IMR-90 (cell line): ENCODE measurements at regions of chr6 and their contacts with region 1.

Region 1: DNA sequence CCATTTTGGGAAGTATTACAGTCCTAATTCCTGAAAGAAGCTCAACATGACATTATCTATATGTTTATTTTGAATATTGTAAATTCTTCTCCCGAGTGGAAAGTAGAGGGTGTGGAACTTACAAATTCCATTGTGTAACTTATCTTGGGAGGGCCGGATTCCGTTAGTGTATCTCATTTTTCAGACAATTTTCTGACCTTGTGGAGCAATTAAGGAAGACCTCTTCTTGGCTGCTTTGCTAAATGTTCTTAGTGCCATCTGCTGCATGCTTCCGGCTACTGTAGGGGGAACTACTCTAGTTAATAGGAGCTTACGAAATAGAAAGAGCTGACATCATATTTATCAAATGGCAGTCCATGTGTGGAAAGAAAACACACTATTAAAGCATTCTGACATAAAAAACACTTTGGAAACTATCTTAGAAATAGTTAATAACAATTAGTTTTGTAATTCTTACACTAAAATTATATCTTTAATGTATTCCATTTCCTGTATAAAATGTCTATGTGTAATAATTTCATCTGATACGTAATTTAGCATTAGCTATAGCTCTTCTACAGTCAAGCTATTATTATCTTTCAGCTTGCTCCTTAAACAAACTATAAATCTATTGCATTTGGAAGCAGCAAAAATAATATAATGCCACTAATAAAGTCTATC is 41.5 kb upstream of the KCNQ5 start:
- DNase-seq: peak; percentile 88
- ATAC-seq: peak; percentile 95
- H3K4me3 ChIP-seq: no peak overlapping the region
- H3K27ac ChIP-seq: no peak overlapping the region
- H3K4me1 ChIP-seq: no peaks in the 10 kb centered on the region
- H3K27me3 ChIP-seq: no peaks in the 10 kb centered on the region
- CTCF ChIP-seq: peak; percentile 89
- POLR2A ChIP-seq: 0 out of 2 replicates have a peak, but pooled peaks have one; percentile 36
- RAD21 ChIP-seq: peak; percentile 91

Region 2: GRCh38 chr6:72140795-72141194 is 439.6 kb before region 1 on chr6:
- CTCF ChIA-PET with region 1: no interaction called
- POLR2A ChIA-PET with region 1: no interaction called
- dilution Hi-C with region 1: no loop called
- in situ Hi-C with region 1: loop called (anchors 25 kb)
- intact Hi-C with region 1: no loop called
- DNase-seq: peak; percentile 38
- ATAC-seq: peak; percentile 66
- H3K4me3 ChIP-seq: no peak overlapping the region
- H3K27ac ChIP-seq: no peak overlapping the region
- H3K4me1 ChIP-seq: no peaks in the 10 kb centered on the region; the same call in 1 of the 2 replicates
- H3K27me3 ChIP-seq: no peaks in the 10 kb centered on the region
- CTCF ChIP-seq: peak; percentile 37
- POLR2A ChIP-seq: no peak
- RAD21 ChIP-seq: peak; percentile 29; the same call in 1 of the 2 replicates

Region 3: GRCh38 chr6:72246926-72247325 is 333.5 kb before region 1 on chr6:
- CTCF ChIA-PET with region 1: no interaction called
- POLR2A ChIA-PET with region 1: no interaction called
- dilution Hi-C with region 1: no loop called
- in situ Hi-C with region 1: loop called (anchors 25 kb)
- intact Hi-C with region 1: loop called (anchors 10 kb)
- DNase-seq: peak; percentile 15
- ATAC-seq: peak; percentile 49
- H3K4me3 ChIP-seq: no peak overlapping the region
- H3K27ac ChIP-seq: no peak overlapping the region
- H3K4me1 ChIP-seq: peaks cover 2% of the 10 kb centered on the region; the same call in 1 of the 2 replicates
- H3K27me3 ChIP-seq: no peaks in the 10 kb centered on the region
- CTCF ChIP-seq: no peak
- POLR2A ChIP-seq: no peak
- RAD21 ChIP-seq: no peak

Region 4: DNA sequence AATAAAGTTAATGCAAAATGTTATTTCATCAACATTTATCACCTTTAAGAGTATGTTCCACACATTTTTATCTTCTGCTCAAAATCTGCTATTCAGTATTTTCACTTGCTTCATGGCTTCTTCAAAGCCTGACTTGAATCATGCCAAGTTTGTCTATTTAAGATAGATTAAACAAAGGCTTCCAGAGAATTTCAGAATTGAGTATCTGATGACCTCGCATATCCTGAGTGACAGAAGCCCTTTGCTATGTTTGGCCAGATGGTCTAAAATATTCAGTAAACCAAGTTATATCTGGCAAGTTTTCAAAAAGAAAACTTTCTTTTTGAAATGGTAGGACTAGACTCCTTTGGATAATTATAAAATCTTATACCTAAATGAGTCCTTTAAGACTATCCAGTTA is 307.5 kb before region 1 on chr6:
- CTCF ChIA-PET with region 1: no interaction called
- POLR2A ChIA-PET with region 1: no interaction called
- dilution Hi-C with region 1: no loop called
- in situ Hi-C with region 1: loop called (anchors 25 kb)
- intact Hi-C with region 1: no loop called
- DNase-seq: peak; percentile 73
- ATAC-seq: peak; percentile 76
- H3K4me3 ChIP-seq: no peak overlapping the region
- H3K27ac ChIP-seq: no peak overlapping the region
- H3K4me1 ChIP-seq: no peaks in the 10 kb centered on the region
- H3K27me3 ChIP-seq: no peaks in the 10 kb centered on the region
- CTCF ChIP-seq: no peak
- POLR2A ChIP-seq: no peak
- RAD21 ChIP-seq: no peak

Region 5: GRCh38 chr6:72418495-72418894 is 161.9 kb before region 1 on chr6:
- CTCF ChIA-PET with region 1: interaction called, 47 read pairs
- POLR2A ChIA-PET with region 1: no interaction called
- dilution Hi-C with region 1: no loop called
- in situ Hi-C with region 1: loop called (anchors 5 kb)
- intact Hi-C with region 1: loop called (anchors 5 kb)
- DNase-seq: peak; percentile 89
- ATAC-seq: peak; percentile 87
- H3K4me3 ChIP-seq: no peak overlapping the region
- H3K27ac ChIP-seq: no peak overlapping the region; the same call in 1 of the 2 replicates
- H3K4me1 ChIP-seq: peaks cover 12% of the 10 kb centered on the region
- H3K27me3 ChIP-seq: no peaks in the 10 kb centered on the region
- CTCF ChIP-seq: no peak
- POLR2A ChIP-seq: no peak
- RAD21 ChIP-seq: no peak; the same call in 1 of the 2 replicates

Region 6: DNA sequence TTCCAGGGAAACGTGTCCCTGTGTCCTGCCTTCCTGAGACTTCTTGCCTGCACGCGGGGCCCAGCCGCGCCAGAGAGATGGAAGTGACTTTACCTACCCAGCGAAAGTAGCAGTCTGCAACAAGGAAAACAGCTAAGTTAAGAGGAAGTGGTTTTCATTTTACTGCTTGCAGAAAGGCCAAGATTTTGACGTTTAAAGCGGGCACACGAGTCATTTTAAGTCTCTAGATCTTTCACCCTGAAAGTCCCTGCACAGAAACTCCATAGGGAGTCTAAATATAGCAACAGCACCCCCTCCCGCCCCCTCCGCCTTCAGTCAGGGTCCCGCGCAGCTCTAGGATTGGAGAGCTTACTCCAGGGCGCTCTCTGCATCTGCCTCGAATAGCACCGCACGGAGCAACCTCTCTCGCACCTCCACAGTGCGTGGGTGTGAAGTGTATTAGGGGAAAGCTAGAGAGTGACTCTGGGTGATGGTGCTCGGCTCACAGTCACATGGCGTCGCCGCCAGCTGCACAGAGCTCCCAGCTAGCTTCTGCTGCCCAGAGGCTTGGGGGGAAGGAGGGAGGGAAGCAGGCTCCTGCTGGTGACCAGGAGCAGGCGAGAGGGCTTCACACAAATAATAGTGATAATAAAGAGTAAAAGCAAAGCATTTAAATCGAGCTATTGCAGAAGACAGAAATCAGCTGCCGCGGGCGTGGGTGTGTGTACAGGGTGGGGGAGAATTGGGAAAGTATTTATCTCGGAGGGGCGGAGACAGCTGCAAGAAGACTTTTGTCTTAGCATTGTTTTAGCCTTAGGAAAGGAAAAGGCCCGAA is 39.7 kb after region 1 on chr6:
- CTCF ChIA-PET with region 1: interaction called, 10 read pairs
- POLR2A ChIA-PET with region 1: no interaction called
- dilution Hi-C with region 1: no loop called
- in situ Hi-C with region 1: no loop called
- intact Hi-C with region 1: no loop called
- DNase-seq: peak; percentile 45
- ATAC-seq: peak; percentile 9
- H3K4me3 ChIP-seq: peak overlapping the region; percentile 27
- H3K27ac ChIP-seq: no peak overlapping the region
- H3K4me1 ChIP-seq: 0 out of 2 replicates have a peak, but pooled peaks cover 2% of the 10 kb centered on the region
- H3K27me3 ChIP-seq: no peaks in the 10 kb centered on the region
- CTCF ChIP-seq: no peak
- POLR2A ChIP-seq: no peak
- RAD21 ChIP-seq: no peak

Region 7: GRCh38 chr6:72832271-72832670 is 251.9 kb after region 1 on chr6:
- CTCF ChIA-PET with region 1: no interaction called
- POLR2A ChIA-PET with region 1: no interaction called
- dilution Hi-C with region 1: no loop called
- in situ Hi-C with region 1: no loop called
- intact Hi-C with region 1: no loop called
- DNase-seq: no peak
- ATAC-seq: no peak
- H3K4me3 ChIP-seq: no peak overlapping the region
- H3K27ac ChIP-seq: no peak overlapping the region
- H3K4me1 ChIP-seq: no peaks in the 10 kb centered on the region
- H3K27me3 ChIP-seq: no peaks in the 10 kb centered on the region
- CTCF ChIP-seq: no peak
- POLR2A ChIP-seq: no peak
- RAD21 ChIP-seq: no peak

Region 8: DNA sequence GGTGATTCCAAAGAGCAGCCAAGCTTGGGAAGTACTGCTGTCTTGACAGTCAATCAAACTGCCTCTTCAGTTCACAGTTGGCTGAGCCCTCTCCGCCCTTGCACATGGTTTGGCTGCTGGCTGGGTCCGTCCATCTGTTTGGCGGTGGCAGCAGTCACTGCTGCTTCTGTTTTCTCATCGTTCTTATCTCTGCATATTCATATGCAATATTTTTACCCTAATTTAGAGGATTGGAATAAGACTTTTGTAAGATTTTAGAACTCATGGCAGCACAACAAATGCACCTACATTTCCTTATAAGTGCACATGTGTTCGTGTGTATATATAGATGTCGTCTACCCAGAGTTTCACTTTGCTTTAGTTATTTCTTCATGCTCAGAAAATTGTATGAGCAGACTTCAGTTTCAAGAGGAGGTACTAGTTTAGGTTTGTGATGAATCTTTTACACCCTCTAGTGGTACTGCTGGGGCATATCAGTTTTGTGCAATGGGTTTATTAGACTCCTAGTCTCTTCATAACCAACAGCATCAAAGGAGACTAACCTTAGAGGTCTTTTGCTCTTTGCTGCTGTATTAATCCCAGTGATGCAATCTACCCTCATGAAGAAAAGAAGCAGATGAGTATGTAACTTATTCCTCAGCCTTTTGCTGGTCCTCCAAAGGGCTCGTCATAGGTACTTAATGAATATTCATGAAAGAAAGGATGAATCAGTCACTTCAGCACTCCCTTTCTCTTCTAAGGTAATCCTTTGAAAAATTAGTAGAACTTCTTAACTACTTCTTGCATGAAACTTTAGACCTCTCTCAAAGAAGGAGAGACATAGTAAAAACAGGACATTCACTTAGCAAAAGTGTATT is 600.6 kb after region 1 on chr6:
- CTCF ChIA-PET with region 1: interaction called, 3 read pairs
- POLR2A ChIA-PET with region 1: no interaction called
- dilution Hi-C with region 1: no loop called
- in situ Hi-C with region 1: no loop called
- intact Hi-C with region 1: loop called (anchors 5 kb)
- DNase-seq: peak; percentile 84
- ATAC-seq: peak; percentile 98
- H3K4me3 ChIP-seq: peak overlapping the region; percentile 42
- H3K27ac ChIP-seq: no peak overlapping the region
- H3K4me1 ChIP-seq: 0 out of 2 replicates have a peak, but pooled peaks cover 2% of the 10 kb centered on the region
- H3K27me3 ChIP-seq: peaks cover 2% of the 10 kb centered on the region
- CTCF ChIP-seq: peak; percentile 90
- POLR2A ChIP-seq: no peak
- RAD21 ChIP-seq: peak; percentile 91